GM12878 (cell line): ENCODE measurements at regions of chr4 and their contacts with region 1.

Region 1: GRCh38 chr4:145180298-145181090 is at the start of gene OTUD4:
- DNase-seq: peak; percentile 79
- ATAC-seq: peak; percentile 81
- H3K4me3 ChIP-seq: peak within 1 kb of the TSS; percentile 91
- H3K27ac ChIP-seq: peak within 1 kb of the TSS; percentile 95
- H3K4me1 ChIP-seq: peaks cover 25% of the 10 kb centered on the region
- H3K27me3 ChIP-seq: no peaks in the 10 kb centered on the region
- CTCF ChIP-seq: peak; percentile 20 to 44 (median 23); a peak in 4 of 6 replicates
- EP300 ChIP-seq: peak; percentile 33 to 50; a peak in 1 of 4 replicates
- POLR2A ChIP-seq: peak; percentile 80
- RAD21 ChIP-seq: peak; percentile 51; the same call in 1 of the 2 replicates
- polyA plus RNA-seq, gene OTUD4: 2.8 to 4.4 TPM

Region 2: GRCh38 chr4:145097821-145098674 is 82.4 kb before region 1 on chr4 and contains the starts of genes ABCE1 and ANAPC10:
- CTCF ChIA-PET with region 1: interaction called, 4 read pairs
- POLR2A ChIA-PET with region 1: interaction called, 25 read pairs
- RAD21 ChIA-PET with region 1: interaction called, 30 read pairs
- SMC1A ChIA-PET with region 1: interaction called, 34 read pairs
- in situ Hi-C with region 1: no loop called
- intact Hi-C with region 1: loop called (anchors 1 kb)
- DNase-seq: peak; percentile 87
- ATAC-seq: peak; percentile 83
- H3K4me3 ChIP-seq: peak within 1 kb of the TSS; percentile 94
- H3K27ac ChIP-seq: peak within 1 kb of the TSS; percentile 86
- H3K4me1 ChIP-seq: peaks cover 10% of the 10 kb centered on the region
- H3K27me3 ChIP-seq: no peaks in the 10 kb centered on the region
- CTCF ChIP-seq: no peak; a peak in 1 of 6 replicates
- EP300 ChIP-seq: peak in 1 of 2 experiments; percentile 58; a peak in 1 of 4 replicates
- POLR2A ChIP-seq: peak; percentile 95
- RAD21 ChIP-seq: no peak
- polyA plus RNA-seq, gene ABCE1: 75.9 to 108 TPM
- polyA plus RNA-seq, gene ANAPC10: 60.2 to 73.7 TPM

Region 3: DNA sequence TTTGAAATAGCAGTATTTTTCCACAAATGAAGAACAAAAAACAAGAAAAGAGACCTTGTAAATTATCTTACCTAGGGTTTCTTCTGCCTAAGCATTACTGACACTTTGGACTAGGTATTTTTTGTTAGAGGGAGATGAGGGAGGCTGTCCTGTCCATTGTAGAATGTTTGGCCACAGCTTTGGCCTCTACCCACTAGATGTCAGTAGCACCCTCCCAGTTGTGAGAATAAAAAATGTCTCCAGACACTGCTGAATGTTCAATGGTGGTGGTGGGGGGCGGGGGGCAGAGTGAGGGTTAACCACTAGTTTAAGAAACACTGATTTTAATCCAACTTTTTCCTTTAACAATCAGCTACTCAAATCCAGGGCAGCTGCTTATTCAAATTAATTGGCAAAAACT is 25.9 kb before region 1 on chr4:
- CTCF ChIA-PET with region 1: interaction called, 8 read pairs
- POLR2A ChIA-PET with region 1: interaction called, 13 read pairs
- RAD21 ChIA-PET with region 1: interaction called, 21 read pairs
- SMC1A ChIA-PET with region 1: interaction called, 42 read pairs
- in situ Hi-C with region 1: no loop called
- intact Hi-C with region 1: no loop called
- DNase-seq: no peak
- ATAC-seq: peak; percentile 94
- H3K4me3 ChIP-seq: no peak overlapping the region
- H3K27ac ChIP-seq: peak overlapping the region; percentile 42; the same call in 1 of the 2 replicates
- H3K4me1 ChIP-seq: peaks cover 7% of the 10 kb centered on the region; the same call in 1 of the 2 replicates
- H3K27me3 ChIP-seq: no peaks in the 10 kb centered on the region
- CTCF ChIP-seq: peak; percentile 59 to 77 (median 70)
- EP300 ChIP-seq: no peak
- POLR2A ChIP-seq: no peak
- RAD21 ChIP-seq: peak; percentile 88

Region 4: GRCh38 chr4:145161549-145161948 is 18.9 kb before region 1 on chr4:
- CTCF ChIA-PET with region 1: interaction called, 4 read pairs
- POLR2A ChIA-PET with region 1: interaction called, 9 read pairs
- RAD21 ChIA-PET with region 1: interaction called, 21 read pairs
- SMC1A ChIA-PET with region 1: interaction called, 42 read pairs
- in situ Hi-C with region 1: no loop called
- intact Hi-C with region 1: no loop called
- DNase-seq: no peak
- ATAC-seq: no peak
- H3K4me3 ChIP-seq: no peak overlapping the region
- H3K27ac ChIP-seq: no peak overlapping the region
- H3K4me1 ChIP-seq: no peaks in the 10 kb centered on the region
- H3K27me3 ChIP-seq: no peaks in the 10 kb centered on the region
- CTCF ChIP-seq: no peak
- EP300 ChIP-seq: no peak
- POLR2A ChIP-seq: no peak
- RAD21 ChIP-seq: no peak

Region 5: DNA sequence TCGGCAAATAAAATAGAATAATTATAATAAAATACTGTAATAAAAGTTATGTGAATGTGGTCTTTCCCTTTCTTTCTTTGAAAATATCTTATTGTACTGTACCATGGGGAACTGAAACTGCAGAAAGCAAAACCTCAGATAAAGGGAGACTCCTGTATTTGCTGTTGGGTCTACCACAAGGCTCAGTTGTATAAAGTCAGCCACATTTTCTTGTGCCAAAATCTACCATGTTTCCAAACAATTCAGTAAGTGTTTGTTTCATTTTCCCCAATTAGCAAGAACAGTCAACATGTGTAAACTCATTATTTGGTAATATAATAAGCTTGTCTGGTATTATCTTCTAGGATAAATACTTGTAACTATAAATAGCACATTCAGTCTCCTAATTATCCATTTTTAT is 14.7 kb after region 1 on chr4:
- CTCF ChIA-PET with region 1: interaction called, 8 read pairs
- POLR2A ChIA-PET with region 1: interaction called, 16 read pairs
- RAD21 ChIA-PET with region 1: interaction called, 3 read pairs
- SMC1A ChIA-PET with region 1: interaction called, 17 read pairs
- in situ Hi-C with region 1: no loop called
- intact Hi-C with region 1: loop called (anchors 1 kb)
- DNase-seq: no peak
- ATAC-seq: peak; percentile 92
- H3K4me3 ChIP-seq: no peak overlapping the region
- H3K27ac ChIP-seq: no peak overlapping the region
- H3K4me1 ChIP-seq: peaks cover 22% of the 10 kb centered on the region
- H3K27me3 ChIP-seq: peaks cover 0 to 2% of the 10 kb centered on the region in 2 experiments; a peak in 1 of 4 replicates
- CTCF ChIP-seq: no peak
- EP300 ChIP-seq: peak; percentile 74 to 95; a peak in 3 of 4 replicates
- POLR2A ChIP-seq: no peak
- RAD21 ChIP-seq: no peak

Region 6: DNA sequence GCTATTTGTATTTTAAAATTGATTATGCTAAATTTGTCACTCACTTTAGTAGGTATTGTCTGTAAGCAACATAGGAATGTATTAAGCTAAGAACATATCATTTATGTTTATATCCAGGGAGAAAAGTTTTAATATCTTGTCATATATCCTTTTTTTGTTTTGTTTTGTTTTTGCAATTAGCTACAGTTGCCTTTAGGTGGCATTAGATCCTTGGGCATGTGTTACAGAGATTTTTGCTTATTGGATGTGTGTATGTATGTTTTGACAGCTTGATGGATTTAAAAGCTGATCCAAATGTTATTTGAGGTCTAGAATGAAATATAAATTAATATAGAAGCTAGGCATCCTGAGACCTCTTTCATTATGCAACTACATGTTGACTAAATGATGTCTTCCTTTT is 36.0 kb after region 1 on chr4:
- CTCF ChIA-PET with region 1: interaction called, 17 read pairs
- POLR2A ChIA-PET with region 1: no interaction called
- RAD21 ChIA-PET with region 1: interaction called, 9 read pairs
- SMC1A ChIA-PET with region 1: interaction called, 13 read pairs
- in situ Hi-C with region 1: no loop called
- intact Hi-C with region 1: no loop called
- DNase-seq: no peak
- ATAC-seq: 0 out of 3 replicates have a peak, but pooled peaks have one; percentile 46
- H3K4me3 ChIP-seq: no peak overlapping the region
- H3K27ac ChIP-seq: no peak overlapping the region
- H3K4me1 ChIP-seq: peaks cover 3% of the 10 kb centered on the region; the same call in 1 of the 2 replicates
- H3K27me3 ChIP-seq: no peaks in the 10 kb centered on the region
- CTCF ChIP-seq: peak; percentile 45 to 59 (median 50); a peak in 5 of 6 replicates
- EP300 ChIP-seq: no peak
- POLR2A ChIP-seq: no peak
- RAD21 ChIP-seq: peak; percentile 88

Region 7: GRCh38 chr4:145266881-145267280 is 86.4 kb after region 1 on chr4:
- CTCF ChIA-PET with region 1: no interaction called
- POLR2A ChIA-PET with region 1: no interaction called
- RAD21 ChIA-PET with region 1: no interaction called
- SMC1A ChIA-PET with region 1: no interaction called
- in situ Hi-C with region 1: no loop called
- intact Hi-C with region 1: no loop called
- DNase-seq: no peak
- ATAC-seq: no peak
- H3K4me3 ChIP-seq: no peak overlapping the region
- H3K27ac ChIP-seq: no peak overlapping the region
- H3K4me1 ChIP-seq: no peaks in the 10 kb centered on the region
- H3K27me3 ChIP-seq: no peaks in the 10 kb centered on the region
- CTCF ChIP-seq: no peak
- EP300 ChIP-seq: no peak
- POLR2A ChIP-seq: no peak
- RAD21 ChIP-seq: no peak

Region 8: GRCh38 chr4:145301386-145302080 is 121.0 kb after region 1 on chr4:
- CTCF ChIA-PET with region 1: no interaction called
- POLR2A ChIA-PET with region 1: no interaction called
- RAD21 ChIA-PET with region 1: no interaction called
- SMC1A ChIA-PET with region 1: no interaction called
- in situ Hi-C with region 1: no loop called
- intact Hi-C with region 1: no loop called
- DNase-seq: no peak
- ATAC-seq: no peak
- H3K4me3 ChIP-seq: no peak overlapping the region
- H3K27ac ChIP-seq: no peak overlapping the region
- H3K4me1 ChIP-seq: peaks cover 13% of the 10 kb centered on the region
- H3K27me3 ChIP-seq: no peaks in the 10 kb centered on the region; a peak in 1 of 4 replicates
- CTCF ChIP-seq: no peak
- EP300 ChIP-seq: no peak
- POLR2A ChIP-seq: no peak
- RAD21 ChIP-seq: no peak

Region 9: DNA sequence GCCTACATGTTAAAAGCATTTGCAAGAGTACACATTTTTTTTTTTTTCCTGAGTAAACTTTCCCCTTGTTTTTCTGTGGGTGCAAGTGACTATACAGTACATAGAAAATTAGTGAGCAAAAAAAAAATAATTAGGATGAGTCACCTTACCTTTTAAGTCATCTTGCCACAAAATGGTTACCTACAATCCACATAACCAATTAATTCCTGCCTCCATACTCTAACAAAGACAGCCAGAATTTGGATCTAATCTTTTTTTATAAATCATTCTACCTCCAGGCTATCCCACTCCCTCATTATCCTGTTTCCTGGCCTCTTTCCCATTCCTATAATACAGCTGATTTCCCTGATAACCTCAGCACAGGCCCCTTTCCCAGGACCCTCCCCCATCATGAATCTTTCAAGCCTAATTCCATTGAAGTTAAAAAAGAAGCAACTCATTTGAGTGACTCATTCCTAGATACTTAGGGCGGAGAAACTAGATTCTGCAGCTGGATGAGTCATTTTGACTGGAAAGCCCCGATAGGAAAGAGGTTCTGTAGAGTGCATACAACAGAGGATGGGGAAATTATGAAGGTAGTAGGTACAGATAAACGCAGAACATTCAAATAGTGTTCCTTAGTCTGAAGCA is 627.6 kb after region 1 on chr4:
- CTCF ChIA-PET with region 1: no interaction called
- POLR2A ChIA-PET with region 1: no interaction called
- RAD21 ChIA-PET with region 1: no interaction called
- SMC1A ChIA-PET with region 1: no interaction called
- in situ Hi-C with region 1: no loop called
- intact Hi-C with region 1: loop called (anchors 5 kb)
- DNase-seq: peak; percentile 86
- ATAC-seq: peak; percentile 87
- H3K4me3 ChIP-seq: peak overlapping the region; percentile 18; the same call in 1 of the 2 replicates
- H3K27ac ChIP-seq: peak overlapping the region; percentile 90
- H3K4me1 ChIP-seq: peaks cover 36% of the 10 kb centered on the region
- H3K27me3 ChIP-seq: no peaks in the 10 kb centered on the region
- CTCF ChIP-seq: no peak
- EP300 ChIP-seq: peak; percentile 87 to 91
- POLR2A ChIP-seq: no peak
- RAD21 ChIP-seq: peak; percentile 34; the same call in 1 of the 2 replicates